ENCODE measurements at regions of chr9 and their contacts with region 1.

Region 1: DNA sequence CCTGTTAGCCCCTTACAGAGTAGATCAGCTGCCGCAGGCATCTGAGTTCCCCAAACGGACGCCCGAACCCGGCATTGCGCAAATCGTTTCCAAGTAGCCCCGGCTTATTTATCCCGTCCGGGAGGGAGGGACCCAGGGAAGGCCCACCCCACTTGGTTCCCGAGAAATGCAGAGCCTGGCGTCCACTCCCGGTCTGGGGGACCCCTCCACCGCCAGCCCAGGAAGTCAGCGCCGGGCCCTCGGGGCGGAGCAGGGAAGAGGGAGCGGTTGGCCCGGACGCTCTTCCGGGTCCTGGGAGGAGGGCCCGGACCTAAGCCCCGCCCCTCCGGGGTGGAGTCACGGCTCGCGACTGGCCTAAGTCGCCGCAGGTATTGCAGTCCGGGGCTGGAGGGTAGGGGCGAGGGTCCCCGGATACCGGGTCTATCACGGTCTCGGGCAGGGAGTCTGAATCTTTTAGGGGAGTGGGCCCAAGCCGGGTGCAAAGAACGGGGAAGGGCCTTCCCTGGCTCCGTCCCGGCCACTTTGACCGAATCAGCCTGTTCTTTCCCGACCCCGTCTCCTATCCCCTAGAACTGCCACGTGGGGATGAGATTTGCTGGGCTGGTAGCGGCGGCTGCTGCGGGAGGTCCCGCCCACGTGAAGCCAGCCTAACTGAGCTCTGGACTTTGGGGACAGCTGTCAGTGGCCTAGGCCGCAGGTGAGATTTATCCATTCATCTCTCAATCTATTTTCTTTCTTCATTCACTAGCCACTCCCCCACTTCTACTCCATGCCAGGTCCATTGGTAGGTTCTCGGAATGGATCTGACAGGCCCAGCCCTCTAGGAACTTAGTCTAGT is at the start of gene RABEPK:
- DNase-seq: peak; percentile 93
- ATAC-seq: peak; percentile 99
- H3K4me3 ChIP-seq: peak within 1 kb of the TSS; percentile 76
- H3K27ac ChIP-seq: peak within 1 kb of the TSS; percentile 70
- H3K4me1 ChIP-seq: peaks cover 2% of the 10 kb centered on the region; the same call in 1 of the 2 replicates
- H3K27me3 ChIP-seq: no peaks in the 10 kb centered on the region
- CTCF ChIP-seq: no peak
- POLR2A ChIP-seq: peak; percentile 80
- RAD21 ChIP-seq: no peak
- total RNA-seq, gene RABEPK: 49.7 and 59.7 TPM in 2 replicates

Region 2: GRCh38 chr9:124940693-124941453 is 259.6 kb before region 1 on chr9 and contains the start of gene GOLGA1:
- CTCF ChIA-PET with region 1: no interaction called
- POLR2A ChIA-PET with region 1: no interaction called
- dilution Hi-C with region 1: no loop called
- in situ Hi-C with region 1: no loop called
- intact Hi-C with region 1: loop called (anchors 2 kb)
- DNase-seq: peak; percentile 93
- ATAC-seq: peak; percentile 89
- H3K4me3 ChIP-seq: peak within 1 kb of the TSS; percentile 84
- H3K27ac ChIP-seq: peak within 1 kb of the TSS; percentile 93
- H3K4me1 ChIP-seq: peaks cover 4% of the 10 kb centered on the region; the same call in 1 of the 2 replicates
- H3K27me3 ChIP-seq: no peaks in the 10 kb centered on the region
- CTCF ChIP-seq: 0 out of 2 replicates have a peak, but pooled peaks have one; percentile 1
- POLR2A ChIP-seq: peak; percentile 89
- RAD21 ChIP-seq: peak; percentile 4; the same call in 1 of the 2 replicates
- total RNA-seq, gene GOLGA1: 10.6 and 11.9 TPM in 2 replicates

Region 3: GRCh38 chr9:125233678-125234077 is 33.2 kb after region 1 on chr9:
- CTCF ChIA-PET with region 1: no interaction called
- POLR2A ChIA-PET with region 1: no interaction called
- dilution Hi-C with region 1: no loop called
- in situ Hi-C with region 1: no loop called
- intact Hi-C with region 1: loop called (anchors 2 kb)
- DNase-seq: peak; percentile 100
- ATAC-seq: peak; percentile 96
- H3K4me3 ChIP-seq: no peak overlapping the region
- H3K27ac ChIP-seq: no peak overlapping the region
- H3K4me1 ChIP-seq: peaks cover 4% of the 10 kb centered on the region; the same call in 1 of the 2 replicates
- H3K27me3 ChIP-seq: no peaks in the 10 kb centered on the region
- CTCF ChIP-seq: no peak
- POLR2A ChIP-seq: no peak; the same call in 1 of the 2 replicates
- RAD21 ChIP-seq: peak; percentile 13; the same call in 1 of the 2 replicates

Region 4: DNA sequence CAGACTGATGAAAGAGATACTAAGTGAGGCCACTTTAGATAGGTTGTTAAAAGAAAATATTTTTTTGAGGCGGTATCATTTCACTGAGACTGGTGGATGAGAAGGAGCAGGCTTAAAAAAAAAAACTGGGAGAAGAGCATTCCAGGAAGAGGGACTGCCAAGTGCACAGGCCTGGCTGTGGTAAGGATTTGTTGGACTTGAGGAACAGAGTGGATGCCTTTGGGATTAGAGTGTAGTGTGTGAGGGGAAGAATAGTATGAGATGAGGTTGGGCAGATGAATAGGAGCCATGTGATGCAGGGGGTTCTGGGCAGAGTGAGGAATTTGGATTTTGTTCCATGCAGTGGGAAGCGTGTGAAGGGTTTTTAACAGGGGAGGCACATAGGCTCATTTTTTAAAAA is 604.6 kb after region 1 on chr9:
- CTCF ChIA-PET with region 1: no interaction called
- POLR2A ChIA-PET with region 1: no interaction called
- dilution Hi-C with region 1: no loop called
- in situ Hi-C with region 1: no loop called
- intact Hi-C with region 1: no loop called
- DNase-seq: peak; percentile 81
- ATAC-seq: peak; percentile 82
- H3K4me3 ChIP-seq: no peak overlapping the region
- H3K27ac ChIP-seq: no peak overlapping the region
- H3K4me1 ChIP-seq: peaks cover 11% of the 10 kb centered on the region
- H3K27me3 ChIP-seq: no peaks in the 10 kb centered on the region
- CTCF ChIP-seq: no peak
- POLR2A ChIP-seq: no peak
- RAD21 ChIP-seq: no peak

Measured in IMR-90 (cell line).